Activated CD8-positive, alpha-beta memory T cell treated with anti-CD3 and anti-CD28 coated beads, Interleukin-2, amount 10 ng/mL, durations not matched to agents 7 days and 5 days (primary cell): ENCODE measurements at regions of chr17 and their contacts with region 1.

Region 1: DNA sequence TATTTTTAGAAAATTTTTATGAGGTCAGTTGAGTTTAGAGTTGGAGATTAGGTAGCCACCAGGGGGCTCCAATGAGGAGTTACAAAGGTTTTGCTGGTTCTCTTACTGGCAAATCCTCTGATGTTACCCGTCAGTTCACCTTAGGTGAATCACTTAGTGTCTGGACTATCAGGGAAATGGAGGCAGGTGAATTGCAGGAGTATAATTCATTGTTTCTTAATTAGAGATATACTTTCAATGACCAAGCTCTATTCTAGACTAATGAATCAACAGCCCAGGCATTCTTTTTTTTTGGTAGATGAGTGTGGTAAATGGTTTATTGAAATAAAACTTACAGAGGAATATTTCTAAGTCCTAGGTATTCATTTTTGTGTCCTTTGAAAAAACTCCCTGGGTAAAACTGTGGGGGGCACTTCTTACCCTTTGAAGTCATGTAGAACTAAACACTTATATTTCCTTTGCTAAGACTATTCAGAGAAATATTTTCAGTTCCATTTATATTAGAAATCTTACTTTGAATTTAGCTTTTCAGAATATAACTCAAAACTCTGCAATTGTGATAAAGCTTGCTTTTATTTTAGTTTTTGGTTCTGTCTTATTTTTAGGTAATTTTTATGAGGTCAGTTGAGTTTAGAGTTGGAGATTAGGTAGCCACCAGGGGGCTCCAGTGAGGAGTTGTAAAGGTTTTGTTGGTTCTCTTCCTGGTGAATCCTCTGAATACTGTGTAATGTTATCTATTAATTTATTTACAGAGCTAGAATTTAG is 17.7 kb downstream of the PSMD11 start:
- DNase-seq: peak; percentile 78
- ATAC-seq: peak; percentile 75
- H3K4me3 Mint-ChIP-seq: no peak overlapping the region
- H3K27ac Mint-ChIP-seq: peak overlapping the region; percentile 66
- H3K4me1 Mint-ChIP-seq: peaks cover 31% of the 10 kb centered on the region
- H3K27me3 Mint-ChIP-seq: no peaks in the 10 kb centered on the region

Region 2: DNA sequence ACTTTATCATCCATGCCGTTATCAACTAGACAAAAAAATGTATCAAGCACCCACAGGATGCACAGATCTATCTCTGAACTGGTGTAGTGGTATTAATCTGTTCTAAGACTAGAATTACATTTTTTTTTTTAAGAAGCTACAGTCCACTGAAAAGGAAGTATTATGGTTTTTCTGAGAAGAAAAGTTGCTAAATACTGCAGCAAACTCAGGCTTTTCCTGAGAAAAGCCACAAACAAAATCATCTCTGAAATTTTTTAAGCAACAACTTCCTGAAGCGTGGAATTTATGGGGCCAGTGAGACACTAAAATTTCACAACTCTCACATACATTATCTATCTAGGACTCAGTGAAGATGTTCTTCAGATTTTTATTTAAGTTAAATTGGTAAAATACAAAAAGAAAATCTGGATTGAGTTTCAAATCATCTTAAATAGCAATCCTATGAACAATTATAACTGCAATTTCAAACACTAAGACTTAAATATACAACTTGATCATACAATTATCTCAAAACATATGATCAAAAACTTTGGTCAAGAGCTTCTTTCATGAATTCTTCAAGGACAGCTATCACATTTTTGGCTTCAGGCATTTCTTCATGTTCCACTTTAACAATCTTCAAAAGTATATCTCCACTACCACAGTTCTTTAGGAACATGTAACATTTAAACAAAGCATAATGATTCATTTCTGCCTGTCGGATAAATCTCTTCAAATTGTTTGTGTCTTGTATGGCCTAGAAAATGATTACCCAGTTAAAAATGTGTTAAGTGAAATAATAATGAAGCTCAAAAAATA is 130.6 kb before region 1 on chr17:
- CTCF ChIA-PET with region 1: no interaction called
- DNase-seq: no peak
- ATAC-seq: peak; percentile 90
- H3K4me3 Mint-ChIP-seq: peak overlapping the region; percentile 48
- H3K27ac Mint-ChIP-seq: peak overlapping the region; percentile 84
- H3K4me1 Mint-ChIP-seq: peaks cover 51% of the 10 kb centered on the region
- H3K27me3 Mint-ChIP-seq: no peaks in the 10 kb centered on the region

Region 3: GRCh38 chr17:32444308-32445073 is 17.5 kb before region 1 on chr17 and contains the start of gene PSMD11:
- CTCF ChIA-PET with region 1: interaction called, 67 read pairs
- DNase-seq: peak; percentile 99
- ATAC-seq: peak; percentile 96
- H3K4me3 Mint-ChIP-seq: peak within 1 kb of the TSS; percentile 82
- H3K27ac Mint-ChIP-seq: peak within 1 kb of the TSS; percentile 90
- H3K4me1 Mint-ChIP-seq: peaks cover 40% of the 10 kb centered on the region
- H3K27me3 Mint-ChIP-seq: peaks cover 15% of the 10 kb centered on the region
- total RNA-seq, gene PSMD11: 110 to 139 TPM

Region 4: GRCh38 chr17:32486111-32486700 is 24.2 kb after region 1 on chr17:
- CTCF ChIA-PET with region 1: interaction called, 34 read pairs
- DNase-seq: peak; percentile 63
- ATAC-seq: peak; percentile 82
- H3K4me3 Mint-ChIP-seq: peak overlapping the region; percentile 52
- H3K27ac Mint-ChIP-seq: no peak overlapping the region
- H3K4me1 Mint-ChIP-seq: peaks cover 24% of the 10 kb centered on the region
- H3K27me3 Mint-ChIP-seq: peaks cover 8% of the 10 kb centered on the region

Region 5: DNA sequence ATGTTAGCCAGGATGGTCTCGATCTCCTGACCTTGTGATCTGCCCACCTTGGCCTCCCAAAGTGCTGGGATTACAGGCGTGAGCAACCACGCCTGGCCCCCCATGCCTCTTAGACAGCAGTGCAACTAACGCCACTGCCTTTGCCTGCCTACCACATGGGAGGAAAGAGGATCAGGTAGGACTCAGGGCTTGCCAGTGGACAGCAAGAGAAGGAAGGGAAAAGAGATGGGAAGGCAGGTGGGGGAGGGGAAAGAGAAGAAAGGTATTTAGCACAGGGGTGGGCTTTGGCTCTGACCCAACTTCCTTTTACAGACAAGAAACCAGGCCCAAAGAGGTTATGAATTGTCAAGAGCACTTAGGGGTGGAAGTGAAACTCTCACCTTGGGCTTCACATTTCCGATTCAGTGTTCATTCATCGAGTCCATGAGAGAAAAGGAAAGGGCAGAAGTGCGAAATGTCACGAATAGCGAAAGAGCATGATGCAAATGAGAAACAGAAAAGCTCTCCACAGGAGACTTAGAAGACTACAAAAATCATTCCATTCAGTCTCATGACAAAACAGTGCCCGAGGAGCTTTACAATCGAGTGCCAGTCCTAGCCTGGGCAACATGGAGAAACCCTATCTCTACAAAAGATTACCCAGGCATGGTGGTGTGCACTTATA is 61.1 kb after region 1 on chr17:
- CTCF ChIA-PET with region 1: interaction called, 35 read pairs
- DNase-seq: peak; percentile 80
- ATAC-seq: peak; percentile 64
- H3K4me3 Mint-ChIP-seq: peak overlapping the region; percentile 48
- H3K27ac Mint-ChIP-seq: peak overlapping the region; percentile 88
- H3K4me1 Mint-ChIP-seq: peaks cover 61% of the 10 kb centered on the region
- H3K27me3 Mint-ChIP-seq: peaks cover 19% of the 10 kb centered on the region

Region 6: DNA sequence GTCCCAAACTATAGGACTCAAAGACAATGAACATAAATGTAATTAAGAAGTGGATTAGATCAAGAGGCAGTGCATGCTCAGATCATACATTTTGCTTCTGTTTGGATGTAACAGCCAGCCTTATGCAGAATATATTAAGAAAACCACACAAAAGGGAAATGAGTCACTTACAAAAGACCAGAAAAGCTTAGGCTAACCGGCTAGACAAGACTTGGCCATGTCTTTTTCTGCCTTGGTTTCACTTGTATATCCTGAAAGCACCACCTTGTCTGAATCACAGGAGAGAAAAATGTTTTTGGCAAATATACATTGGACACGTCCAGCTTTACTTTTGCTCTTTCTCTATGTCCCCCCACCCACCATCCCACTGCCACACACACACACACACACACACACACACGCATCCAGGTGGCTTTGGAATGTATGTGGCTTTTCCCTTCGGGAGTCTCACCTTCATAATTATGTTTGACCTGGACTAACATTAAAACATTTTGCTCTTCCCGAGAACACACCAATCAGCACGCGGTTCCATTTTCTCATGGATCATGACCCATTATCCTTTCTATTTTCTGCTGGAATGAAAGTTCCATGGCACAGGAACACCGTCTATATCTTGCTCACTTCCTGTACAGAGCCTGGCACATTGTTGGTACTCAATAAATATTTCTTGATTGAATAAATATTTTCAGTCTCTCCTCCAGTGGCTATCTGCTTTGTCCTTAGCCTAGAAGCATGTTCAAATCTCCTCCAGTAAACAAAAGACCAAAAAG is 89.3 kb after region 1 on chr17:
- CTCF ChIA-PET with region 1: interaction called, 10 read pairs
- DNase-seq: peak; percentile 51
- ATAC-seq: peak; percentile 97
- H3K4me3 Mint-ChIP-seq: peak overlapping the region; percentile 28
- H3K27ac Mint-ChIP-seq: peak overlapping the region; percentile 79
- H3K4me1 Mint-ChIP-seq: peaks cover 56% of the 10 kb centered on the region
- H3K27me3 Mint-ChIP-seq: no peaks in the 10 kb centered on the region

Region 7: DNA sequence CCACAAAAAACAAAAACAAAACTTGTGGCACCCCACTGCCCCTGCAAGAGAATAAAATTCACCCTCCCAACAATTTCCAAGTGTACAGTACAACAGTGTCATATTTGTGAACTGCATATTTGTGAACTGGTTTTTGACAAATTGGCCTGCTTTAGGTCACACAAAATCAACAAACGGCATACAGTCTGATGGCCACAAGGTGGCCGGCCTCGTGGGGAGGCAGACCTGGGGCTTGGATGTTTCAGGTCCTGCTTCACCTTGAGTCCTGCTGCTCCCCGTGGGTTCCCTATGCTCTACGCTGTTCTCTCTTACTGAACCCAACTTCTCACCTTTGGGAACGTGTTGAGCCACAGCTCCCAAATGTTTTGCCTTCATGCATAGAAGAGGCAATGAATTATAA is 126.9 kb after region 1 on chr17:
- CTCF ChIA-PET with region 1: no interaction called
- DNase-seq: no peak
- ATAC-seq: no peak
- H3K4me3 Mint-ChIP-seq: no peak overlapping the region
- H3K27ac Mint-ChIP-seq: no peak overlapping the region
- H3K4me1 Mint-ChIP-seq: no peaks in the 10 kb centered on the region
- H3K27me3 Mint-ChIP-seq: no peaks in the 10 kb centered on the region

Region 8: DNA sequence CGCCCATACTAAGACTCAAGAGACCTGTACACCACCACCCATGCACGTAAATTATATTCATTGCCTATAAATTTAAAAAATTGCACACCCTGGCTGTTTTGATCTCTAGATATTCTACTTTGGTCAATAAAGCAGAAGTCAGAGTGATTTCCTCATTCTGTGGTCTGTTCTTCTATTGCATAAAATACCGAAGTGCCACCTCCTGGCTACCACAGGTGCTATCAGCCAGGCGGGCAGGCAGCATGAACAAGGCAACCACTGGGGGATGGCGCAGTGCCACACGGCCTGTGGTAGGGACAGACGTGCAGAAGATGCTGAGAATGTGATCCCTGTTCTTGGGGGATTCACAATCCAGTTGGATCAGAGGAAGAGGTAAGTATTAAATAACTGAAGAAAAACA is 147.1 kb after region 1 on chr17:
- CTCF ChIA-PET with region 1: interaction called, 17 read pairs
- DNase-seq: peak; percentile 84
- ATAC-seq: peak; percentile 98
- H3K4me3 Mint-ChIP-seq: no peak overlapping the region
- H3K27ac Mint-ChIP-seq: no peak overlapping the region
- H3K4me1 Mint-ChIP-seq: peaks cover 8% of the 10 kb centered on the region
- H3K27me3 Mint-ChIP-seq: peaks cover 5% of the 10 kb centered on the region

Region 9: GRCh38 chr17:32755045-32755805 is 293.2 kb after region 1 on chr17:
- CTCF ChIA-PET with region 1: interaction called, 14 read pairs
- DNase-seq: no peak
- ATAC-seq: peak; percentile 51
- H3K4me3 Mint-ChIP-seq: no peak overlapping the region
- H3K27ac Mint-ChIP-seq: no peak overlapping the region
- H3K4me1 Mint-ChIP-seq: peaks cover 6% of the 10 kb centered on the region
- H3K27me3 Mint-ChIP-seq: no peaks in the 10 kb centered on the region